ENCODE measurements at regions of chr19 and their contacts with region 1.

Region 1: GRCh38 chr19:35693830-35694599 is 10.3 kb upstream of the ZBTB32 start:
- DNase-seq: peak; percentile 68
- H3K4me3 ChIP-seq: no peak overlapping the region
- H3K27ac ChIP-seq: no peak overlapping the region
- H3K4me1 ChIP-seq: no peaks in the 10 kb centered on the region
- H3K27me3 ChIP-seq: no peaks in the 10 kb centered on the region
- CTCF ChIP-seq: peak; percentile 98

Region 2: DNA sequence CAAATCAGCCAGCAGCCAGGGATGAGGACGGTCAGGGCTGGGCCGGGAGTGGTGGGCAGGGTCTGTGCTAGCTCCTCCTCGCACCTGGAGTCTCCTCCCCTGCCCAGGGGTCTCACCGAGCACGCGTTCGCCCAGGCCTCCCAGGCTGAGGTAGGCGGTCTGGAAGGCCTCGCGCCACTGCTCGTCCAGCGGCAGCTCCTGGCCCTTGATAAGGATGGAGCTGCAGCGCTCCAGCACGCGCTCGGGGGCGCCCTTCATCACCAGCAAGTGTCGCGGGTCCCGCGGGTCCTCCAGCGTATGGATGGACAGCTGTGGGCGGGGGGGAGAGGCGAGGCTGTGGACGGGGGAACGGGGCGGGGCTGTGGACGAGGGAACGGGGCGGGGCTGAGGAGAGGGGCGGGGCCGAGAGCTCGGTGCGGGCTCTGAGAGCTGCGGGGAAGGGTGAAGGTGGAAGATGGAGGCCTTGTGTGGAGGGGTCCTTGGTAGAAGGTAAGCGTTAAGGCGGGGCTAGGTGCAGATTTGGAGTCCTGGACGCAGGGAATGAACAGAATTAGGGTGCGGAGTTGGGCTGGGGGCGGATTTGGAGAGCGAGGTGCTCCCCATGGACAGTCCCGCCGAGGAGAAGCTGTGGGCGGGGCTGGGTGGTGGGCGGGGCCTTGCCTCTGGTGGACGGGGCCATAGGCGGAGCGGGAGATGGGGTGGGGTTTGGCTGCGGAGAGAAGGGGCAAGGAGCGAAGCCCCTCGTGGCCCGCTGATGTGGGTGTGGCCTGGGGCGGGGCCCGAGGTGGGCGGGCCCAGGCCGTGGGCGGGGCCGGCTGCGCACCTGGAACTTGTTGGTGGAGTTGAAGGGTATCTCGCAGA is 136.2 kb before region 1 on chr19:
- CTCF ChIA-PET with region 1: no interaction called
- dilution Hi-C with region 1: loop called (anchors 5 kb)
- in situ Hi-C with region 1: no loop called
- intact Hi-C with region 1: no loop called
- DNase-seq: peak; percentile 52
- H3K4me3 ChIP-seq: peak overlapping the region; percentile 36 to 44 (median 43)
- H3K27ac ChIP-seq: no peak overlapping the region
- H3K4me1 ChIP-seq: peaks cover 10% of the 10 kb centered on the region
- H3K27me3 ChIP-seq: no peaks in the 10 kb centered on the region
- CTCF ChIP-seq: no peak

Region 3: DNA sequence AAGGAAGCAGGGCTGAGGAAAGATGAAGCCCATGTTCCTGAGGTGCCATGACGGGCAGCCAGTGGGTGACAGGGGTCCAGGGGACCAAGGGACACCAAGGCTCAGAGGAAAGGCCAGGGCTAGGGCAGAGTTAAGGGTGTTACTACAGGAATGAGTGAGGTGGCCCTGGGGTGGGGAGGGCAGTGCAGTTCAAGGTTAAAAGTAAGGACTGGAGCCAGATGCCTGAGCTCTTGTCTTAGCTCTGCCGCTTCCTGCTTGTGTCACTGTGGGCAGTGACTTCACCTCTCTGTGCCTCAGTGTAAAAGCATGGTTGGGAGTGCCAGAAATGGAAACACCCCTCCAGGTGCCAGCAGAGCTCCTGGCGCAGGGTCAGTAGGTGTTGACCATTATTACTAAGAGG is 57.4 kb before region 1 on chr19:
- CTCF ChIA-PET with region 1: no interaction called
- dilution Hi-C with region 1: loop called (anchors 5 kb)
- in situ Hi-C with region 1: no loop called
- intact Hi-C with region 1: no loop called
- DNase-seq: no peak
- H3K4me3 ChIP-seq: no peak overlapping the region
- H3K27ac ChIP-seq: no peak overlapping the region
- H3K4me1 ChIP-seq: peaks cover 4% of the 10 kb centered on the region
- H3K27me3 ChIP-seq: no peaks in the 10 kb centered on the region
- CTCF ChIP-seq: no peak

Region 4: DNA sequence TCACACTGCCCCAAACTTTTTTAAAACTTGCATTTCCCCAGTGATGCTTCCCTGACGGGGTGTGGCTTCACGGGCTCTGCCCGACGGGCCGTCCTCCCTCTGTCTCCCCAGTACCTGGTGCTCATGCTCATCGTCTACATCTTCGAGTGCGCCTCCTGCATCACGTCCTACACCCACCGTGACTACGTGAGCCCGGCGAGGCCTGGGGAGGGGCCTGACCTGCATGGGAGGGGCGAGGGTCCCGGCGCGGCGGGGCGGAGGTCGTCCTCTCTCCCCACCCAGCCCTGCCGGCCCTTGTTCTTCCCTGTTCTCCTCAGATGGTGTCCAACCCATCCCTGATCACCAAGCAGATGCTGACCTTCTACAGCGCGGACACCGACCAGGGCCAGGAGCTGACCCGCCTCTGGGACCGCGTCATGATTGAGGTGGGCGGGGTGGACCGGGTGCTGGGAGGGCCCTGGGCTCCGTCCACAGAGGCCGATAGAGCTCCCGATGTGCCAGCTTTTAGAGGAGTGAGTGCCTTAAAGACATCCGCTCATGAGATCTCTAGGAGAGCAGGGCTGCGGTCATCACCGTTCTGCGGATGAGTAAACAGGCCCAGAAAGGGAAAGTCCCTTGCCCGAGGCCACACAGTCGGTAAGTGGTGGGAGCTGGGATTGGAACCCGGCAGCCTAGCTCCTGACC is 20.8 kb before region 1 on chr19:
- CTCF ChIA-PET with region 1: no interaction called
- dilution Hi-C with region 1: no loop called
- in situ Hi-C with region 1: no loop called
- intact Hi-C with region 1: no loop called
- DNase-seq: peak; percentile 84
- H3K4me3 ChIP-seq: peak overlapping the region; percentile 29 to 51 (median 48)
- H3K27ac ChIP-seq: no peak overlapping the region
- H3K4me1 ChIP-seq: peaks cover 4% of the 10 kb centered on the region
- H3K27me3 ChIP-seq: no peaks in the 10 kb centered on the region
- CTCF ChIP-seq: no peak

Region 5: GRCh38 chr19:35736913-35737886 is 43.2 kb after region 1 on chr19:
- CTCF ChIA-PET with region 1: no interaction called
- dilution Hi-C with region 1: loop called (anchors 5 kb)
- in situ Hi-C with region 1: no loop called
- intact Hi-C with region 1: no loop called
- DNase-seq: no peak
- H3K4me3 ChIP-seq: no peak overlapping the region
- H3K27ac ChIP-seq: no peak overlapping the region
- H3K4me1 ChIP-seq: peaks cover 9% of the 10 kb centered on the region
- H3K27me3 ChIP-seq: no peaks in the 10 kb centered on the region
- CTCF ChIP-seq: peak in 1 of 2 donors; percentile 12

Region 6: DNA sequence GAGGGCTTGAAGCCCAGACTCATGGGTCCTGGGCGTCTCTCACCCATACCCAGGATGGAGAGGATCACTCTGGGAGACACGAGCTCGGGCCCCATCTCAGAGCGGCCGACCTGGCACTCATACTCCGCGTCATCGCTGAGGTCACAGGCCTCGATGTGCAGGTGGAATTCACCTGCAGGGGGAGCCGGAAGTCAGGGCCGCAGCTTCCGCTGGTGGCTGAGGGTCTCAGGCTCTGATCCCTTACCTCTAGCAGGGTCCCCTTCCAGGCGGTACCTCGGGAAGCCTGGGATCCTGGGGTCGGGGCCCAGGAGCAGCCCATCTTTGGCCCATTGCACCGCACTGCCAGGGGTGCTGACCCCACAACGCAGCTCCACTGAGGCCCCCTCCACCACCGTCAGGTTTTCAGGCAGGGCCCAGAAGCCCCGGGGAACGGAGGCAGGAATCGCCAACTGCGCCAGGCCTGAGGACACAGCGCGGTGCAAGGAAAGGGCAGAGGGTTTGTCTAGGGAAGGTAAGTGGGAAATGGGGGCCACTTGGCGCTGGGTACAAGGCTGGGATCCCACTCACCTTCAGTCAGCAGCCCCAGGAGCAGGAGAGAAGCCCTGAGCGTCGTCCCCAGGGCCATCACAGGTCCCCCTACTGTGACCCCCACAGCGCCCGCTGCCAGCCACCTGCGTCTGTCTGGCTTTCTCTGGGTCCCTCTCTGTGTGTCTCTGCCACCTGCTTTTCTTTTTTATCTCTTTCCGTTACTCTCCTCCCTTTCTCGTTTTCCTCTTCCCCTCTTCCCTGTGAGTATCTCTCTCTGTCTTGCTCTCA is 157.4 kb after region 1 on chr19:
- CTCF ChIA-PET with region 1: no interaction called
- dilution Hi-C with region 1: loop called (anchors 5 kb)
- in situ Hi-C with region 1: no loop called
- intact Hi-C with region 1: no loop called
- DNase-seq: no peak
- H3K4me3 ChIP-seq: no peak overlapping the region
- H3K27ac ChIP-seq: no peak overlapping the region
- H3K4me1 ChIP-seq: peaks cover 3% of the 10 kb centered on the region
- H3K27me3 ChIP-seq: peaks cover 6% of the 10 kb centered on the region
- CTCF ChIP-seq: no peak

Region 7: GRCh38 chr19:35931161-35931873 is 237.3 kb after region 1 on chr19:
- CTCF ChIA-PET with region 1: no interaction called
- dilution Hi-C with region 1: no loop called
- in situ Hi-C with region 1: no loop called
- intact Hi-C with region 1: loop called (anchors 1 kb)
- DNase-seq: peak; percentile 99
- H3K4me3 ChIP-seq: peak overlapping the region; percentile 23 to 43 (median 37)
- H3K27ac ChIP-seq: no peak overlapping the region
- H3K4me1 ChIP-seq: peaks cover 8% of the 10 kb centered on the region
- H3K27me3 ChIP-seq: no peaks in the 10 kb centered on the region
- CTCF ChIP-seq: peak; percentile 77 to 97

Measured in mammary epithelial cell (primary cell).